IMR-90 (cell line): ENCODE measurements at regions of chr10 and their contacts with region 1.

Region 1: GRCh38 chr10:99630439-99630838 is 10.2 kb upstream of the SLC25A28 start:
- DNase-seq: peak; percentile 64
- ATAC-seq: peak; percentile 90
- H3K4me3 ChIP-seq: no peak overlapping the region
- H3K27ac ChIP-seq: no peak overlapping the region
- H3K4me1 ChIP-seq: peaks cover 1% of the 10 kb centered on the region; the same call in 1 of the 2 replicates
- H3K27me3 ChIP-seq: no peaks in the 10 kb centered on the region
- CTCF ChIP-seq: peak; percentile 69
- POLR2A ChIP-seq: no peak
- RAD21 ChIP-seq: peak; percentile 66

Region 2: GRCh38 chr10:99659031-99659867 is 28.8 kb after region 1 on chr10 and contains the start of gene ENTPD7:
- CTCF ChIA-PET with region 1: interaction called, 3 read pairs
- POLR2A ChIA-PET with region 1: interaction called, 4 read pairs
- dilution Hi-C with region 1: no loop called
- in situ Hi-C with region 1: no loop called
- intact Hi-C with region 1: loop called (anchors 1 kb)
- DNase-seq: peak; percentile 95
- ATAC-seq: peak; percentile 99
- H3K4me3 ChIP-seq: peak within 1 kb of the TSS; percentile 79
- H3K27ac ChIP-seq: peak within 1 kb of the TSS; percentile 69
- H3K4me1 ChIP-seq: peaks cover 5% of the 10 kb centered on the region; the same call in 1 of the 2 replicates
- H3K27me3 ChIP-seq: no peaks in the 10 kb centered on the region
- CTCF ChIP-seq: 0 out of 2 replicates have a peak, but pooled peaks have one; percentile 8
- POLR2A ChIP-seq: peak; percentile 88
- RAD21 ChIP-seq: no peak
- total RNA-seq, gene ENTPD7: 20.0 and 23.3 TPM in 2 replicates

Region 3: GRCh38 chr10:99845837-99846382 is 215.5 kb after region 1 on chr10:
- CTCF ChIA-PET with region 1: no interaction called
- POLR2A ChIA-PET with region 1: no interaction called
- dilution Hi-C with region 1: no loop called
- in situ Hi-C with region 1: no loop called
- intact Hi-C with region 1: loop called (anchors 10 kb)
- DNase-seq: peak; percentile 94
- ATAC-seq: peak; percentile 94
- H3K4me3 ChIP-seq: no peak overlapping the region
- H3K27ac ChIP-seq: no peak overlapping the region
- H3K4me1 ChIP-seq: no peaks in the 10 kb centered on the region
- H3K27me3 ChIP-seq: no peaks in the 10 kb centered on the region
- CTCF ChIP-seq: peak; percentile 96
- POLR2A ChIP-seq: no peak
- RAD21 ChIP-seq: peak; percentile 93